ENCODE measurements at regions of chr7 and their contacts with region 1.

Region 1: DNA sequence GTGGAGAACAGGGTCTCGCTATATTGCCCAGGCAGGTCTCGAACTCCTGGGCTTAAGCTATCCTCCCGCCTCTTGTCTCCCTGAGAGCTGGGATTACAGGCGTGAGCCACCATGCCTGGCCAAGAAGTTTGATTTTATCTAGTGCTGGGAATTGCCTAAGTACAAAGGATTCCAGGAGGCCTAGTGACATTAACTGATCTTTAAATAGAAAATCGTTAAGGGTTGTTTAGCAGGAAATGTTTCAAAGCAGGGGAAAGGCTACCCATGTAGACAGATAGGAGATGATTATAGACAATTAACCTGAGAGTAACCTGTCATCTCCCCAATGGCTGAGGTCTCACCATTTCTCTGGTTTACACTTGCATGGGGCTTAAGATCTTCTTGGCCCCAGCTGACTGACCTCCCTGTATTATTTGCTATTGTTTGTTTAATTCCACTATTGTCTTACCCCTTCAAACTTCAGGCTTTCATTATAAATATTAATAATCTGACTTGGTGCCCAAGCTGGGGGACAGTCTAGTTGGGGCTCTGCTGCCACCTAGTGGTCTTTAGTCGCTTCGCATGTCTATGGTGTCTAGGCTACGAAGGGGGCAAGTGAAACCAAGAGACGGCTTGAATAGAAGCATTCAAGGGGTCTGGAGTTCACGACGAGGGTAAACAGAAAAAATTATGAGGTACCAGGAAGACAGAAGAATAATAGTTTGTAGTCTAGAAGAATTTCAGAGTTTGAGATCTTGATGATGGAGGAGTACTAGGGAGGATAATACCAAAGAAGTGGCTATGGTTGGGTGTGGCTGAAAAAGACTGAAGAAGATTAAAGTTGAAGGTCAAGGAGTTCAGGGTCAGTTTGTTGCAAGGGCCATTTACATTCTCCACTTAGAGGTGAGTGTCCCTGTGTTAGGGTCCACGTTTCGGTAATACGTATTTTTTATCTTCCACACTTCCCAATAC is 40.4 kb upstream of the BPGM start:
- DNase-seq: no peak
- ATAC-seq: peak; percentile 29

Region 2: GRCh38 chr7:134432296-134433152 is 173.7 kb before region 1 on chr7:
- intact Hi-C with region 1: loop called (anchors 1 kb)
- DNase-seq: peak; percentile 92
- ATAC-seq: peak; percentile 97

Region 3: GRCh38 chr7:134448700-134449229 is 157.5 kb before region 1 on chr7:
- intact Hi-C with region 1: no loop called
- DNase-seq: no peak
- ATAC-seq: no peak

Region 4: DNA sequence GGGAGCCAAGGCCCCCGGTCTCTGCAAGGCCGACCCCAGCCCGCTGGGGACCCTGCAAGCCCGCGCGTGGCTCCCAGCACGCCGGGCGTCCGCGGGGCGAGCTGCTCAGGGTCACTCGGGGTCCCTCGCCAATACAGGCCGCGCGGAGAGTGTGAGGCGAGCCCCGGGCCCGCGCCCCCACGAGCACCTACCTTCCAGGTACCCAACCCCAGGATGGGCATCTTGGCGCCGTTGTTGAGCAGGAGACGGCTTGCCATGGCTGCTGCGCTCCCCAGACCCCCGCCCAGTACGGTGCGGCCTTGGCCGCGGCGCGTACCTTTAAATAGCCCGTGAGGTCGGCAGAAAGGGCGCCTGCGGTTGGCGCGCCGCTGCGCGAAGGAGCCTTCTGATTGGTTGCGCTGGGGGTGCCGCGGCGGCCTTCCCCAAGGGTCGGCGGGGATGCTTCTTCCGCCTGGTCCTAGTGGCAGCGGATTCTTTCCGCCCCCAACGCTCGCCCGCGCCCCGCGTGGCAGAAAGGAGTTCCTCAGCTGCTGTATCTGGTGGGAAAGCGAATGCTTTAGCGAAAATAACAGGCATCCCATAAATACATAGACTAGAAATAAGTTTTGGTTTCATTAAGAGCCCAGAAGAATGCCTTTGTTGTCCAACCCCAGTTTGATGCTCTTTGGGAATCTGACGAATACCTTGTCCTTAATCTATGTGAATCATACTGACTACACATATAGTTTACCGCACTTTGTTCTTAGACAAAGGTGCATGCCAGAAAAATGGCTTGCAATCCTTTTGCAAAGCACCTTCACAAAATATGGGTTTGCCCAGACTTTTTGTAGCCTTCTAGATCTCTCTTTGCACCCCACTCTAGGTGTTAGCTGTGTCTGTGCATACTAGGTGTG is 147.2 kb before region 1 on chr7 and contains the start of gene AKR1B1:
- intact Hi-C with region 1: no loop called
- DNase-seq: peak; percentile 93
- ATAC-seq: peak; percentile 98
- total RNA-seq, gene AKR1B1: 232 TPM

Region 5: DNA sequence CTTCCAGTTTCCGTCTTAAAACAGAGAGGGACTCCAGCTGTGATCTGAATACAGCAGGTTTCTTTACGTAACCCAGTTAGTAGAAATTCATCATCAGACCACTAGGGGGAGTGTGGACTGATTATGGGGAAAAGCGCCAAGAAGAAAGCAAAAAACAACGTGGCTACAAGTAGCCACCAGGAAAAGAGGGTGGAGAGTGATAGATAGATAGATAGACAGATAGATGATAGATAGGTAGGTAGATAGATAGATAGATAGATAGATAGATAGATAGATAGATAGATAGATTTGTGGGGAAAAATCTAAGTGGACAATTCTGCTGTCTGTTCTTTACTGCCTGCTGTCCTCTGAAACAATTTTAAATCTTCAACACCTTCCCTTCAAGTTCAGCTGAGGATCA is 91.6 kb before region 1 on chr7:
- intact Hi-C with region 1: loop called (anchors 1 kb)
- DNase-seq: no peak
- ATAC-seq: peak; percentile 49

Region 6: GRCh38 chr7:134533288-134533771 is 72.9 kb before region 1 on chr7:
- intact Hi-C with region 1: loop called (anchors 5 kb)
- DNase-seq: no peak
- ATAC-seq: no peak

Region 7: GRCh38 chr7:134547397-134548054 is 58.7 kb before region 1 on chr7:
- intact Hi-C with region 1: loop called (anchors 5 kb)
- DNase-seq: no peak
- ATAC-seq: peak; percentile 95

Measured in Right ventricle myocardium inferior (tissue), 1 donor.